Dorsolateral prefrontal cortex (tissue), 120 donors: ENCODE measurements at regions of chr2 and their contacts with region 1.

Region 1: DNA sequence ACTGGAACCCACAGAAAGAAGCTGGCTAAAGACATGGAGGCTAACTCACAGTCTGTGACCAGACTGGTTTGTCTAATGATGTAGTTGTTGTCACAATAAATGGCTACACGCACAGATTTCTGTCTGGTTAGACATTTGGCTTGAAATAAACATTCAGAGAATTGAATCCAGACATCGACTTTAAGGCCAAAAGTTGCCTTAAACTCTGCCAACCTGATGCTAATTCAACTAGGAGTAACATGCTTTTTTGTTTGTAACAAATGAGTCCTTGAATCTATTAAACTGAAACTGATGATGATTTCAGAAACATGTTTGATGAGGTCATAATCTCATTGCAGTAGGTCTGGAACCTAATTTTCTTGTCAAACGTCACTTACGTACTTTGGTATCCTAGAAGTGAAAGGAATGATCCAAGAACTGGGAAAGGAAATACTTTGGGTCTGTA is 123.8 kb downstream of the ERBB4 start:
- DNase-seq: no peak
- H3K4me3 ChIP-seq: peak overlapping the region in 40 of 59 donors; percentile 0 to 51 (median 24)
- H3K27ac ChIP-seq: peak overlapping the region in 45 of 59 donors; percentile 12 to 90 (median 62)
- H3K27me3 ChIP-seq: no peaks in the 10 kb centered on the region
- CTCF ChIP-seq: no peak

Region 2: GRCh38 chr2:212364112-212364985 is 50.4 kb before region 1 on chr2:
- intact Hi-C with region 1: loop called (anchors 5 to 10 kb)
- DNase-seq: no peak
- H3K4me3 ChIP-seq: peak overlapping the region in 35 of 59 donors; percentile 0 to 50 (median 24)
- H3K27ac ChIP-seq: peak overlapping the region in 57 of 59 donors; percentile 19 to 92 (median 66)
- H3K27me3 ChIP-seq: no peaks in the 10 kb centered on the region
- CTCF ChIP-seq: peak in 1 of 56 donors; percentile 6

Region 3: DNA sequence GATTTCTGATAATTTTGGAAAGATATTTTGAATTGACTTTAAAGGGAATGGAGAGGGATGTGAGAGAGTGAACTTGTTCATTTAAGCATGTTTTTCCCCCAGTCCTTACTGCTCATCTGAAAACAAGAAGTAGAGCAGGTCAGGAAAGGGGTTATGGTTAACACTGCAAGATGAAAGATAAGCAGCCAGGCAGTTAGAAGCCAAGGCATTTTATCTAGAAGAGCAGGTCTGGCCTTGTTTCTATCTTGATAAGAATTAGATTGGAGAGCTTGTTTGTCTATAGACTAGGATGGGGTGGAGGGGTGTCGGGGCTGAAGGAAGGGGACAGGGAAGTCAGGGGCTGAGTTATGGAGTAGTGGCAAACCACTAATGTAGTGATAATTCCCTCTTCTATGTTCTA is 565.0 kb after region 1 on chr2:
- intact Hi-C with region 1: no loop called
- DNase-seq: no peak
- H3K4me3 ChIP-seq: no peak overlapping the region
- H3K27ac ChIP-seq: no peak overlapping the region
- H3K27me3 ChIP-seq: no peaks in the 10 kb centered on the region
- CTCF ChIP-seq: no peak